ENCODE measurements at regions of chr9 and their contacts with region 1.

Region 1: GRCh38 chr9:96009690-96010472 is 134.4 kb downstream of the ERCC6L2 start:
- DNase-seq: peak; percentile 74
- H3K4me3 Mint-ChIP-seq: no peak overlapping the region
- H3K27ac Mint-ChIP-seq: peak overlapping the region; percentile 92
- H3K4me1 Mint-ChIP-seq: peaks cover 54% of the 10 kb centered on the region
- H3K27me3 Mint-ChIP-seq: no peaks in the 10 kb centered on the region

Region 2: DNA sequence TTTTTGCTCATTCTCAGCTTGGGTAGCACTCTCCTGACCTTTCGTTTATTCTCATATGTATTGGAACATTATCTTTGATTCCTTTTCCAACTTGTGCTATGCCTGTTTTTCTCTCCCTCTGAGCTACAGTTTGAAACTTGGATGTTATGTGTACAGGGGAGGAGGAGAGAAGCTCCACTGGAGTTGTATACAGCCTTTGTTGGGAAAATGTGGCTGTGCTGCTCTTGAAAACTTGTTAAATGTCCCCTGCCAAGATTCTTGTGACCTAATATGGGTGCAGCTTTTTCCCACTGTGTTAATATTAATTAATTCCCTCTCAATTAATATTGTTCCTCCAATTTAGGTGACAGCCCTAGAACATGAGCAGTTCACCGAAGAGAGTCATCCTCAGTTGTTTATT is 1048.0 kb before region 1 on chr9:
- intact Hi-C with region 1: no loop called
- DNase-seq: no peak
- H3K4me3 Mint-ChIP-seq: no peak overlapping the region
- H3K27ac Mint-ChIP-seq: no peak overlapping the region
- H3K4me1 Mint-ChIP-seq: no peaks in the 10 kb centered on the region
- H3K27me3 Mint-ChIP-seq: no peaks in the 10 kb centered on the region

Region 3: DNA sequence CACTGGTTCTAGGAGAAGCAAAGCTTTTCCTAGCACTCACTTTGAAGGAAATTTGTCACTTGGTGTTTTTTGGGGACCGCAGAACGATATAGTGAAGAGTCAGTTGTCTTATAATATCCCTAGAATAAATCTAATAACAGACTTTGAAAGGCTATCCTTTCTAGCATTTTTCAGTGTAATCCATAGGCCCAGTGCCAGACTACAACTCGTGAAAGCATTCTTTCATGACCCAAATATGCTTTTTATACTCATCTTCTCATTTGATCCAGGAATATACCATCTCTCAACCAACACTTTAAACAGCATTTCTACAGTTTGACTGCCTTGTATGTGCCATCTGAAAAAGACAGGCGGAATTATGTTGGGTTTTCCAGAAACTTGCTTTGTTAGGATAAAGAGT is 30.4 kb before region 1 on chr9:
- intact Hi-C with region 1: loop called (anchors 5 kb)
- DNase-seq: no peak
- H3K4me3 Mint-ChIP-seq: no peak overlapping the region
- H3K27ac Mint-ChIP-seq: no peak overlapping the region
- H3K4me1 Mint-ChIP-seq: peaks cover 28% of the 10 kb centered on the region
- H3K27me3 Mint-ChIP-seq: no peaks in the 10 kb centered on the region

Region 4: GRCh38 chr9:95992536-95992935 is 17.3 kb before region 1 on chr9:
- intact Hi-C with region 1: loop called (anchors 2 kb)
- DNase-seq: no peak
- H3K4me3 Mint-ChIP-seq: no peak overlapping the region
- H3K27ac Mint-ChIP-seq: no peak overlapping the region
- H3K4me1 Mint-ChIP-seq: peaks cover 30% of the 10 kb centered on the region
- H3K27me3 Mint-ChIP-seq: no peaks in the 10 kb centered on the region

Region 5: GRCh38 chr9:96116275-96117064 is 106.6 kb after region 1 on chr9:
- intact Hi-C with region 1: no loop called
- DNase-seq: no peak
- H3K4me3 Mint-ChIP-seq: no peak overlapping the region
- H3K27ac Mint-ChIP-seq: no peak overlapping the region
- H3K4me1 Mint-ChIP-seq: peaks cover 31% of the 10 kb centered on the region
- H3K27me3 Mint-ChIP-seq: peaks cover 16% of the 10 kb centered on the region

Region 6: GRCh38 chr9:96360976-96361375 is 351.1 kb after region 1 on chr9:
- intact Hi-C with region 1: no loop called
- DNase-seq: no peak
- H3K4me3 Mint-ChIP-seq: no peak overlapping the region
- H3K27ac Mint-ChIP-seq: no peak overlapping the region
- H3K4me1 Mint-ChIP-seq: no peaks in the 10 kb centered on the region
- H3K27me3 Mint-ChIP-seq: no peaks in the 10 kb centered on the region

Measured in activated T-helper 2 cell treated with anti-CD3 and anti-CD28 coated beads, Interferon-gamma antibody, Interleukin-2, Interleukin-4, amounts not matched to agents 10 μg/mL and 5 μg/mL and 100 μg/mL, durations not matched to agents 14 hours and 24 hours and 36 hours (primary cell).